Psoas muscle (tissue), 8 donors: ENCODE measurements at regions of chr3 and their contacts with region 1.

Region 1: GRCh38 chr3:177185035-177185574 is 12.2 kb downstream of the TBL1XR1 start:
- DNase-seq: no peak
- ATAC-seq: peak; percentile 61 to 85 (median 70)
- H3K4me3 ChIP-seq: no peak overlapping the region
- H3K27ac ChIP-seq: no peak overlapping the region
- H3K4me1 ChIP-seq: peaks cover 58% of the 10 kb centered on the region
- H3K27me3 ChIP-seq: no peaks in the 10 kb centered on the region
- CTCF ChIP-seq: no peak

Region 2: GRCh38 chr3:177126015-177126773 is 58.9 kb before region 1 on chr3:
- intact Hi-C with region 1: loop called (anchors 5 to 10 kb)
- DNase-seq: no peak
- ATAC-seq: peak; percentile 64 to 81 (median 70)
- H3K4me3 ChIP-seq: no peak overlapping the region
- H3K27ac ChIP-seq: peak overlapping the region; percentile 23
- H3K4me1 ChIP-seq: peaks cover 64% of the 10 kb centered on the region
- H3K27me3 ChIP-seq: no peaks in the 10 kb centered on the region
- CTCF ChIP-seq: no peak

Region 3: GRCh38 chr3:177133860-177134815 is 51.0 kb before region 1 on chr3:
- intact Hi-C with region 1: loop called (anchors 5 to 10 kb)
- DNase-seq: no peak
- ATAC-seq: peak in 1 of 4 donors; percentile 38
- H3K4me3 ChIP-seq: no peak overlapping the region
- H3K27ac ChIP-seq: no peak overlapping the region
- H3K4me1 ChIP-seq: peaks cover 26% of the 10 kb centered on the region
- H3K27me3 ChIP-seq: no peaks in the 10 kb centered on the region
- CTCF ChIP-seq: no peak